Endothelial cell of umbilical vein (primary cell): ENCODE measurements at regions of chr3 and their contacts with region 1.

Region 1: DNA sequence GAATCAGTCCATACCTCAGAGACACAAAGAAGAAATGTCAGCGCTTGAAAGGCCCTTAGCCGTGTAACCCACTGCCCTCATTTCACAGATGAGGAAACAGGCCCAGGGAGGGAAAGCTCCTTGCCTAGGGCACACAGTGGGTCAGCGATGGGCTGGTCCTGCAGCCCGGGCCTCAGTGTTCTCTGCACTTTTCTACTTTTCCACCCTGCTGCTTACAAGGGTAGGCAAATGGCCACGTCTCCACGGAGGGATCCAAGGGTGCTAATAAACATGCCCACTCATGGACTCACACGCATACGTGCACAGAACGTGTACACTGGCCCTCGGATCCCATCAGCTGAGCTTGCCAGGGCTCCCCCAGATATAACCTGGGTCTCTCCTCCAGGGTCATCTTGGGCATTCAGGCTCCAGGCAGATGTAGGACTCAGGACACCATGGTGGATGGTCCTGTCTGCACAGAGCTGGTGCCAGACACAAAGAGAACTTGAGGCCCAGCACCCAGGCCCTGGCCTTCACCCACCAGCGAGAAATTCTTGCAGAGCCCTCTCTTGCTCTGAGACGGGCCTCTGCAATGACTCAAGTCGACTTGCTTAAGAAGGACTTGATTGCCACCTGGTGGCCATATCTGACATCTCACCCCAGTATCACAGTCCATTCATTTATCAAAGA is 34.5 kb upstream of the VPS8 start:
- DNase-seq: peak; percentile 85
- H3K4me3 ChIP-seq: no peak overlapping the region
- H3K27ac ChIP-seq: no peak overlapping the region
- H3K4me1 ChIP-seq: no peaks in the 10 kb centered on the region
- H3K27me3 ChIP-seq: peaks cover 0 to 12% of the 10 kb centered on the region in 2 experiments
- CTCF ChIP-seq: peak; percentile 67 to 75
- POLR2A ChIP-seq: no peak

Region 2: DNA sequence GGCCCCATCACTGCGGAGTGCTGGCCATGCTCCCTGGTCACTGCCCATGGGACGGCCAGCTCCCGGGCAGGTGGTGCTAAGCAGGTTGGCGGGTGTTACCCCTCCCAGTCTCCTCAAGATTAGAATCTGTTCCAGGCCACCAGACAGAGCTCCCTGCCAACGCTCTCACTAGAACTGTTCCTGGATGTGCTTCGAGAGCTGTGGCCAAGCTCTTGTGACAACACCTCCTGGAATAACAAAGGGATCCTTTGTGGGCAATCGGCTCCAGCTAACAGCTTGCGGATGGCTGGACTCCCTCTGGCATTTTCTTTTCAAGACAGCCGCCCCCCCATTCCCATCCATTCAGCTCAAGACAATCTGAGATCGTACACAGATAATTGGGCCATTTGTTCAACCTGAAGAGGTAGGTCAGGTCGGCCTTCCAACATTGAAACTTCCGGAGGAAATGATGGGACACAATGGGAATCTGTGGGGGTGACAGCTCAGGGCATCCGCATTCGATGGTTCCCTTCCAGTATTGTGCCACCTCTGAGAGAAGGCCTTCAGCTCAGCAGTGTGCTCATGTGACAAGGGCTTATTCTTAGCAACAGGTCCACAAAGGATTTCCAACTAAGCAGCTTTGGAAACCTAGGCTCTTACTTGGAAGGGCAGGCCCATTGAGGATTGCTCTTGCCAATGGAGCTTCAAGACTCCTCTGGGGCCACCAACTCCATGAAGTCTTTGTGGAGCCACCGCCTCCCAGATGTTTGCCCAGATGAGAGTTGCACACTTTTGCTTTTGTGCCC is 227.5 kb before region 1 on chr3:
- CTCF ChIA-PET with region 1: interaction called, 13 read pairs
- POLR2A ChIA-PET with region 1: no interaction called
- dilution Hi-C with region 1: no loop called
- intact Hi-C with region 1: no loop called
- DNase-seq: no peak
- H3K4me3 ChIP-seq: no peak overlapping the region
- H3K27ac ChIP-seq: no peak overlapping the region
- H3K4me1 ChIP-seq: no peaks in the 10 kb centered on the region
- H3K27me3 ChIP-seq: peaks cover 7% of the 10 kb centered on the region in 2 experiments
- CTCF ChIP-seq: no peak
- POLR2A ChIP-seq: no peak

Region 3: GRCh38 chr3:184727357-184728009 is 50.0 kb before region 1 on chr3:
- CTCF ChIA-PET with region 1: interaction called, 15 read pairs
- POLR2A ChIA-PET with region 1: no interaction called
- dilution Hi-C with region 1: no loop called
- intact Hi-C with region 1: loop called (anchors 1 kb)
- DNase-seq: peak; percentile 65
- H3K4me3 ChIP-seq: no peak overlapping the region
- H3K27ac ChIP-seq: no peak overlapping the region
- H3K4me1 ChIP-seq: no peaks in the 10 kb centered on the region
- H3K27me3 ChIP-seq: peaks cover 3 to 7% of the 10 kb centered on the region in 2 experiments
- CTCF ChIP-seq: peak; percentile 73 to 74
- POLR2A ChIP-seq: no peak

Region 4: GRCh38 chr3:184801241-184801785 is 23.8 kb after region 1 on chr3:
- CTCF ChIA-PET with region 1: interaction called, 27 read pairs
- POLR2A ChIA-PET with region 1: no interaction called
- dilution Hi-C with region 1: no loop called
- intact Hi-C with region 1: loop called (anchors 1 kb)
- DNase-seq: no peak
- H3K4me3 ChIP-seq: no peak overlapping the region
- H3K27ac ChIP-seq: no peak overlapping the region
- H3K4me1 ChIP-seq: no peaks in the 10 kb centered on the region
- H3K27me3 ChIP-seq: peaks cover 18 to 29% of the 10 kb centered on the region in 2 experiments
- CTCF ChIP-seq: no peak
- POLR2A ChIP-seq: no peak

Region 5: DNA sequence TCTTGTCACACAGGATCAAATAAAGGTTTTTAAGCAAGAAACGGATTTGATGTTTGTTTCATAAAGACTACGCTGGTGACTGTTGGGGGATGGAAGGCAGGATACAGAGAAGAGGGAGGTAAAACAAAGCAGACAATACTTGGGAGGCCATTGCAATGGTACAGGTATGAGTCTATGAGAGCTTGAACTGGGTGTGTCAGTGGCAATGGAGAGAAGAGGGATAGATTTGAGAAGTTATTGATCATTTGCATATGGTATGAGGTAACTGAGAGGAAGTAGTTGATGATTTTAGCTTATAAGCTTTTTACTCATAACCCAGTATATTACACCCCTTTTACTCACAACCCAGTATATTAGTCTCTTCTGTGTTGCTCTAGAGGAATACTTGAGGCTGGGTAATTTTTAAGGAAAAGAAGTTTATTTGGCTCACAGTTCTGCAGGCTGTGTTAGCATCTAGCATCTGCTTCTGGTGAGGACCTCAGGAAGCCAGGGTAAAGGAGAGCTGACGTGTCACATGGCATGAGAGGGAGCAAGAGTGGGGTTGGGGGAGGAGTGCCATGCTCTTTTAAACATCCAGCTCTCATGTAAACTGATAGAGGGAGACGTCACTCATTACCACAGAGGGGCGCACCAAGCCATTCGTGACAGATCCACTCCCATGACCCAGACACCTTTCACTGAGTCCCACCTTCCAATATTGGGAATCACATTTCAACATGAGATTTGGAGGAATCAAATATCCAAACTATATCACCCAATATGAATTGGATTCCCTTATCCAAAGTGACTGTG is 188.4 kb after region 1 on chr3:
- CTCF ChIA-PET with region 1: no interaction called
- POLR2A ChIA-PET with region 1: no interaction called
- dilution Hi-C with region 1: no loop called
- intact Hi-C with region 1: no loop called
- DNase-seq: no peak
- H3K4me3 ChIP-seq: no peak overlapping the region
- H3K27ac ChIP-seq: no peak overlapping the region
- H3K4me1 ChIP-seq: no peaks in the 10 kb centered on the region
- H3K27me3 ChIP-seq: no peaks in the 10 kb centered on the region
- CTCF ChIP-seq: no peak
- POLR2A ChIP-seq: no peak